SK-N-SH (cell line): ENCODE measurements at regions of chr2 and their contacts with region 1.

Region 1: DNA sequence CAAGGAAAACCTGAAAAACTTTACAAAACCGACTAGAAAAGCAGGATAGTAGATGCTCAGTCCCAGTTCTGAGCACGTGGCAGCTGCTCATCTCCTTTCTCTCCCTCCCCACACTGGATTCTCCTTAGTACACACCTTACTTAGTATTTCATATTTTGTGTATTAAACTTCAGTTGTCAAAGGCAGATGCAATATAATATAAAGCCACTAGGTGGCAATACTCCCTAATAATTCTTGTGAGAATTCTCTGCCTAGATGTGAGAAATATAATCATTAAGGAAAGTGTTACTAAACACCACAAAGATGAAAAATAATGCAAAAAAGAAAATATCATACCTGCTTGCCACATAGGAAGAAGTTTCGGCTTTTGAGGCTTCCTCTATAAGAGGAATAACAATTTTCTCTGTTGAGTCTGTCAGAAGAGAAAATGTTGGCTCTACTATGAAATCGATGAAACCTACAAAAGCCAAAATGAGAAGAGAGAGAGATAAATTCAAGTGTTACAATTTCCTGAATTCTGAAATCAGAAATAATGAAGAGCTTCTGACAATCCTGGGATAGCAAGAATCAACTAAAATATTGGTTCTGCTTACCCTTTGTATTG is 200.6 kb downstream of the PPP1R1C start:
- DNase-seq: peak; percentile 8
- H3K4me3 ChIP-seq: no peak overlapping the region
- H3K27ac ChIP-seq: no peak overlapping the region
- H3K4me1 ChIP-seq: no peaks in the 10 kb centered on the region
- H3K27me3 ChIP-seq: no peaks in the 10 kb centered on the region
- CTCF ChIP-seq: peak; percentile 88
- EP300 ChIP-seq: no peak
- RAD21 ChIP-seq: peak; percentile 91

Region 2: GRCh38 chr2:181523756-181524155 is 662.5 kb before region 1 on chr2:
- CTCF ChIA-PET with region 1: no interaction called
- POLR2A ChIA-PET with region 1: no interaction called
- DNase-seq: no peak
- H3K4me3 ChIP-seq: no peak overlapping the region
- H3K27ac ChIP-seq: no peak overlapping the region
- H3K4me1 ChIP-seq: peaks cover 0 to 6% of the 10 kb centered on the region in 2 experiments; a peak in 2 of 4 replicates
- H3K27me3 ChIP-seq: no peaks in the 10 kb centered on the region
- CTCF ChIP-seq: no peak
- EP300 ChIP-seq: no peak
- RAD21 ChIP-seq: no peak

Region 3: DNA sequence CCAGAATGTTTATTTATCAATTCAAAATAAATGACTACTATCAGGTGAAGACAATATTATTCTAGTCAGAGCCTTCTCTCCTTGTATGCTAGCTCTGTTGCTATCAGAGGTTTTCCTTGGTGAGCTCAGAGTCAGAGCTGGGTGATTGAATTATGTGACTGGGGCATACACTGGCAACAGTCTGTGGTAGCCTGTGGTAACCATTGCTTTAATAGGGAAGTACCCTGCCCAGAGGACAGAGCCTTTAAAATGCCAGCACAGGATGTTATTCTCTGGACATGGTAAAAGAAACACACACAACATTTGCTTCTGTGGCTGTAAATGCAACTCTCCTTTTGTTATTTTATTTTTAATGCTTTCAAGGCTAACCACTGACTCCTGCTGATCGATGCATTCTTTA is 75.9 kb before region 1 on chr2:
- CTCF ChIA-PET with region 1: no interaction called
- POLR2A ChIA-PET with region 1: no interaction called
- DNase-seq: no peak
- H3K4me3 ChIP-seq: no peak overlapping the region
- H3K27ac ChIP-seq: no peak overlapping the region
- H3K4me1 ChIP-seq: no peaks in the 10 kb centered on the region
- H3K27me3 ChIP-seq: no peaks in the 10 kb centered on the region
- CTCF ChIP-seq: no peak
- EP300 ChIP-seq: no peak
- RAD21 ChIP-seq: no peak

Region 4: DNA sequence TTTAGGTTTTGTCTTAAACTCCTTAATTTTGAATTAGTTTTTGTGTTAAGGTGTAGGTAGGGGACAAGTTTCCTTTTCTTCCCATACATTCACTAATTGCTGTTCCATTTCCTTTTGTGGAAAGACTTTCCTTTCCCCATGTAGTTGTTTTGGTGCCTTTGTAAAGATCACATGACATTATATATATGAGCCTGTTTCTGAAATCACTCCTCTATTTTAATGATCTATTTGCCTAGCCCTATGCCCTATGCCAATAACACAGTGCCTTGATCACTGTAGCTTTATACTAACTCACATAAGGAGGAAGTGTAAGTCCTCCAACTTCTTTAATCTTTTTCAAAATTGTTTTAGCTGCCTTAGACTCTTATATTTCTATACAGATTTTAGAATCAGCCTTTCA is 11.3 kb after region 1 on chr2:
- CTCF ChIA-PET with region 1: interaction called, 17 read pairs
- POLR2A ChIA-PET with region 1: no interaction called
- DNase-seq: no peak
- H3K4me3 ChIP-seq: no peak overlapping the region
- H3K27ac ChIP-seq: no peak overlapping the region
- H3K4me1 ChIP-seq: no peaks in the 10 kb centered on the region
- H3K27me3 ChIP-seq: no peaks in the 10 kb centered on the region
- CTCF ChIP-seq: no peak
- EP300 ChIP-seq: no peak
- RAD21 ChIP-seq: no peak